Stomach (tissue), 19 donors: ENCODE measurements at regions of chr1 and their contacts with region 1.

Region 1: DNA sequence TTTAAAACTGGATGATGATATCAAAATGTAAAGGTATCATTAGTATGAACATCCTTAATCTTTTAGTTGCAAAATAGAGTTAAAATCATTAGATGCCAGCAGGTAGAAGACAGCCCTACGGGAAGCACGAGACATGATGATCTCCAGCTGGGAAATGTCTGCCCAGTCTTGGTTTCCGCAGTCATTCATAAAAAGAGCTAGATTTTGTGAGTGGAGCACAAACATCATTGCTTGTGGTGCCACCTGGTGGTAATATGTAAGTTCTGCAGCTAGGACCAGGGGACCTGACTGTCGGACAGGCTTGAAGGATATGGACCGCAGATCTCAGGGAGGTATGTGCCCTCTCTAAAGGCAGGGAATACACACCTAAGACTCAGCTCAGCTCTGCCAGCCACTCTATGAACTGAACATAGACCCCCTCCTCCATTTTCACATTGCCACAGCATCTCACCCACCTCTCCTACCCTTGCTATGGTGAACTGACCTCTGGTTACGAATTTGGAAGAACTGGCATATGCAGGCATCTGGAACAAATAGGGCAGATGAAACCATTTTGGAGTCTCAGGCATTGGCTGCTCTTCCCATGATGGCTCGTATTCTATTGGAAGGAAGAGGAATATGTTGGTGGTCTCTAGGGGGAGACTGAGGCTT is 9.2 kb downstream of the FCMR start:
- DNase-seq: peak; percentile 75 to 93
- H3K4me3 ChIP-seq: no peak overlapping the region
- H3K27ac ChIP-seq: no peak overlapping the region
- H3K4me1 ChIP-seq: peaks cover 14 to 37% (median 22%) of the 10 kb centered on the region in 4 donors
- H3K27me3 ChIP-seq: peaks cover 0 to 39% (median 10%) of the 10 kb centered on the region in 3 donors
- CTCF ChIP-seq: peak in 6 of 7 experiments; percentile 14 to 91 (median 86)
- EP300 ChIP-seq: no peak
- POLR2A ChIP-seq: no peak

Region 2: DNA sequence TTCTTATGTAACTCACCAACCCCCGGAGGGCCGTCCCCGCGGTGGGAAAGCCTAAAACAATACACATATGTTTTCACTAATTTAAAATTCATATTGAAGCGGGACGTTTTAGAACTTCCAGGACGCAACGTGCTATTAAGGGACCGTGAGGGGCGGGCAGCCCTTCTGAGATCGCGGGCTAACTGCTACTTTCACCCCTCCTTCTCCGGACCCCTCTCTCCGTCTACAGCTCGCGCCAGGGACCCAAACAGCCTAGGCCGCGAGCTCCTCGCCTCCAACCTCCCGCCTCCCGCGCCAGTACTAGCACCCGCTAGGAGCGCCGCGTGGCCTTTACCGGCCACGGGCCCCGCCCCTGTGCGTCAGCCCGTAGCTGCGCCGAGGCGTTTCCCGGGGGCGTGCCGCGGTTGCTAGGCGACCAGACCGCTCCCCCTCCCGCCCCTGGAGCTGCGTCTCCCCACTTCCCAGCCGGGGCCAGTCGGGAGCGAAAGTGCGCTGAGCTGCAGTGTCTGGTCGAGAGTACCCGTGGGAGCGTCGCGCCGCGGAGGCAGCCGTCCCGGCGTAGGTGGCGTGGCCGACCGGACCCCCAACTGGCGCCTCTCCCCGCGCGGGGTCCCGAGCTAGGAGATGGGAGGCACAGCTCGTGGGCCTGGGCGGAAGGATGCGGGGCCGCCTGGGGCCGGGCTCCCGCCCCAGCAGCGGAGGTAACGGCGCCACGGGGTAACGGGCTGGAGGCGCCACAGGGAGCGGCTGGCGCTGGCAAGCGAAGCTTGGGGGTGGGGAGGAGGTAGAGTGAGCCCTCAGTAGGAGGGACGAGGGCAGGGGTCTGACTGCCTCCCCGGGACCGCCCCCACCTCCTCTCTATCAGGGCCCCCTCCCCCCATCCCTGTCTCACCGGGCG is 277.2 kb before region 1 on chr1 and contains the start of gene DYRK3:
- intact Hi-C with region 1: loop called (anchors 10 kb)
- DNase-seq: peak; percentile 97 to 98
- H3K4me3 ChIP-seq: peak within 1 kb of the TSS; percentile 75 to 97 (median 88)
- H3K27ac ChIP-seq: peak within 1 kb of the TSS; percentile 81 to 91 (median 85)
- H3K4me1 ChIP-seq: peaks cover 9 to 40% (median 30%) of the 10 kb centered on the region in 4 donors
- H3K27me3 ChIP-seq: no peaks in the 10 kb centered on the region
- CTCF ChIP-seq: no peak
- EP300 ChIP-seq: no peak
- POLR2A ChIP-seq: peak in 2 of 4 donors; percentile 61 to 77
- total RNA-seq, gene DYRK3: 1.2 to 21.9 (median 4.7) TPM in 4 of 5 donors, not detected in the other

Region 3: DNA sequence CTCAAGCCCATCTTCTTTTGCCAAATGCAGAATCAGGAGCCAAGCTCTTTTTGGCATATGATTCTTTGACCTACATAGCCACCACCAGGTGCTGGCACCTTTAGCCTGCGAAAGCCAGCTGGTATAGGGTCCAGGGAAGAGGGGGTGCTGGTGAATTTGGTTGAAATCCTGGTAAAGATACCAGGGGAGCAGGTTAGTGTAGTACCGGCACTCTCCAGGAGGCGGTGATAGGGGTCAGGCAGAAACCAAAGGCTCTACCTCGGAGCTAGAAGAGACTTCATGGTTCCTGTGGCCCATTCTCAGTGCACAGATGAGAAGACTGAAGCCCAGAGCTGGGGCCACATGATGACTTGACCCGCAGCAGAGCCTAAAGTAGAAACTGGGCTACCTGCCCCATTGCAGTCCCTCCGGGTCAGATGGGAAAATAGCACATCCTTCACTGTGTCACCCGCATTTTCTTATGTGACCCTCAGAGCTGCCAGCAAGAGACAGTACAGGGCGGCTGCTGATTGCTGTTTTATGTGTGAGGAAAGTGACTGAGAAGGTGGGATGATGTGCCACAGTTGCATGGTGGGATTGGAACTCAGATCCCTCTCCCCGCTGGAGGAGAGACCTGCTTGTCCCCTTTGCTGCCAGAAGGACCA is 177.9 kb before region 1 on chr1:
- intact Hi-C with region 1: loop called (anchors 10 kb)
- DNase-seq: peak; percentile 60 to 70
- H3K4me3 ChIP-seq: no peak overlapping the region
- H3K27ac ChIP-seq: no peak overlapping the region
- H3K4me1 ChIP-seq: peaks cover 0 to 54% (median 18%) of the 10 kb centered on the region in 4 donors
- H3K27me3 ChIP-seq: no peaks in the 10 kb centered on the region
- CTCF ChIP-seq: peak in 5 of 7 experiments; percentile 59 to 78 (median 71)
- EP300 ChIP-seq: no peak
- POLR2A ChIP-seq: no peak

Region 4: DNA sequence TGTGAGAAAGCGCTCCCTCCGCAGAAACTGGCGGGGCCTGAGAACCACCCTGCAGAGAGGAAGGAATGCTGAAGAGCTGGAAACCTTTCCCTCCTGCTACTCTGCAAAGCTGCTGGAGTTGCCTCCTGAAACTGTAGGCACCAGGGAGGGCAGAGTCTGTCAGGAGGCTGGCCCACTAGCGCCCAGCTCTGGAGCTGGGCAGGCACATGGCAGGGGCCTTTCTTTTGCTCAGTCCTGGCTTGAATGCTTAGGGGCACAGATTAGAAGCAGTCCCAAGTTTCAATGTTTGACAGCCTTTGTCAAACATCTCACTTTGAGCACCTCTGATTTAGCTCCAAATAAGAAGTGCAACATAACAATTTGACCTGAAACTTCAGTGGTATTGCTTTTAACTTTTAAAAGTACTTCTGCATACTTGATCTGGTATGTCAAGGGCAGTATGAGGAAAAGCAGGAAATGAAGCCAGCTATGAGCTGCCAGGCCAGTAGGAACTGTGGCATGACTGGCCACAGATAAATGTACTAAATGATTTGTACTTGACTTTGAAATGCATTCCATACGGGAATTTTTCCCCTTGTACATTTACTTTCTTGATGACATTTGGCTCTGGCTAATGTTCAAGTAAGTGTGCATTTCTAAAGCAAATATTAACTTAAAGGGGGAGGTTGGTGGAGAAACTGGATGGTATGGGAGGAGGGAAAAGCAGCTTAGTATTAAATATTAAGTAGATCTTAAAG is 112.7 kb after region 1 on chr1:
- intact Hi-C with region 1: no loop called
- DNase-seq: peak; percentile 72 to 88
- H3K4me3 ChIP-seq: no peak overlapping the region
- H3K27ac ChIP-seq: peak overlapping the region; percentile 88 to 97 (median 91)
- H3K4me1 ChIP-seq: peaks cover 53 to 76% (median 67%) of the 10 kb centered on the region in 4 donors
- H3K27me3 ChIP-seq: no peaks in the 10 kb centered on the region
- CTCF ChIP-seq: no peak
- EP300 ChIP-seq: no peak
- POLR2A ChIP-seq: peak in 1 of 4 donors; percentile 5

Region 5: DNA sequence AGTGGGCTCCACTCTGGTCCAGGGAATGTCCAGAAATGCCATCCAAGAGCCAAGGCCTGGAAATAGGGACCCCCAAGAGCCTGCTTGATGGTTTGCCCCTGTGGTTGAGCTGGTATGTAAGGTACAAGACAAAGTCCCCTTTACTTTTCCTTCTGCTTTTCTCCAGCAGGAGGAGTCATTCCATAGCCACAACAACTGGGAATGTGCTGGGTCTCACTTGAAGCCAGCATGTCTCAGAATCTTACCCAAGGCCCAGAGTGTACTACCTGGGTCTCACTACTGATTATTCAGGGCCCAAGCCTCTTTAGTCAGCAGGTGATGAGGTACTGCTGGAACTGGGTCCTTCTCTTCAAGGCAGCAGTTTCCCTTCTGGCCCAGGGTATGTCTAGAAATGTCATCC is 346.8 kb after region 1 on chr1:
- intact Hi-C with region 1: no loop called
- DNase-seq: peak in 1 of 2 donors; percentile 64
- H3K4me3 ChIP-seq: no peak overlapping the region
- H3K27ac ChIP-seq: no peak overlapping the region
- H3K4me1 ChIP-seq: no peaks in the 10 kb centered on the region
- H3K27me3 ChIP-seq: no peaks in the 10 kb centered on the region
- CTCF ChIP-seq: peak in 4 of 7 experiments; percentile 28 to 46 (median 39)
- EP300 ChIP-seq: no peak
- POLR2A ChIP-seq: no peak